Activated CD4-positive, alpha-beta memory T cell treated with anti-CD3 and anti-CD28 coated beads for 36 hours (primary cell): ENCODE measurements at regions of chr9 and their contacts with region 1.

Region 1: DNA sequence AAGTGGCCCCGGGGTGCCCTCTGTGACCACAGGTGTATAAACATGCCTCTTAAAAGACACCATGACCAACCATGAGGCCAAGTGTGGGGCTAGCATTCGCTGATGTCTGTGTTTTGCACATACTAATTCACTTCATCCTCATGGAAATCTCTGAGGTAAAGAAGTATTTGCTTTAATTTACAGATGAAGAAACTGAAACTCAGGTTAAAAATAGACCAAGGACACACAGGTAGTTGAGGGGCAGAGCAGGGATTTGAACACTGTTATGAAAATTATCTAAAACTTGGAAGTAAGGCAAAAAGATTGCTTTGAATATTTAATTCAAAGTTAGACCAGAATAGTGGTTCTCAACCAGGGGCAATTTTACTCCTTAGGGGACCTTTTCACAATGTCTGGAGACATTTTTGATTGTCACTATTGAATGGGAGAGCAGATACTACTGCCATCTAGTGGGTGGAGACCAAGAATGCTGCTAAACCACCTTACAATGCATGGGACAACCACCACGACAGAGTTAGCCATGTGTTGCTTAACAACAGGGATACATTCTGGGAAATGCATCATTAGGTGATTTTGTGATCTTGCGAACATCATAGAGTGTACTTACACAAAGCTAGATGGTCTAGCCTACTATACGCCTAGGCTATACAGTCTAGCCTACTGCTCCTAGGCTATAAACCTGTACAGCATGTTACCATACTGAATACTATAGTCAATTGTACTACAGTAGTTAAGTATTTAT is 8.0 kb upstream of the FXN start:
- DNase-seq: peak; percentile 39
- H3K4me3 Mint-ChIP-seq: no peak overlapping the region
- H3K27ac Mint-ChIP-seq: peak overlapping the region; percentile 40
- H3K4me1 Mint-ChIP-seq: peaks cover 32% of the 10 kb centered on the region
- H3K27me3 Mint-ChIP-seq: no peaks in the 10 kb centered on the region

Region 2: GRCh38 chr9:68584189-68585033 is 443.1 kb before region 1 on chr9:
- CTCF ChIA-PET with region 1: interaction called, 6 read pairs
- POLR2A ChIA-PET with region 1: no interaction called
- intact Hi-C with region 1: loop called (anchors 1 kb)
- DNase-seq: peak; percentile 87
- H3K4me3 Mint-ChIP-seq: no peak overlapping the region
- H3K27ac Mint-ChIP-seq: no peak overlapping the region
- H3K4me1 Mint-ChIP-seq: no peaks in the 10 kb centered on the region
- H3K27me3 Mint-ChIP-seq: peaks cover 6% of the 10 kb centered on the region

Region 3: DNA sequence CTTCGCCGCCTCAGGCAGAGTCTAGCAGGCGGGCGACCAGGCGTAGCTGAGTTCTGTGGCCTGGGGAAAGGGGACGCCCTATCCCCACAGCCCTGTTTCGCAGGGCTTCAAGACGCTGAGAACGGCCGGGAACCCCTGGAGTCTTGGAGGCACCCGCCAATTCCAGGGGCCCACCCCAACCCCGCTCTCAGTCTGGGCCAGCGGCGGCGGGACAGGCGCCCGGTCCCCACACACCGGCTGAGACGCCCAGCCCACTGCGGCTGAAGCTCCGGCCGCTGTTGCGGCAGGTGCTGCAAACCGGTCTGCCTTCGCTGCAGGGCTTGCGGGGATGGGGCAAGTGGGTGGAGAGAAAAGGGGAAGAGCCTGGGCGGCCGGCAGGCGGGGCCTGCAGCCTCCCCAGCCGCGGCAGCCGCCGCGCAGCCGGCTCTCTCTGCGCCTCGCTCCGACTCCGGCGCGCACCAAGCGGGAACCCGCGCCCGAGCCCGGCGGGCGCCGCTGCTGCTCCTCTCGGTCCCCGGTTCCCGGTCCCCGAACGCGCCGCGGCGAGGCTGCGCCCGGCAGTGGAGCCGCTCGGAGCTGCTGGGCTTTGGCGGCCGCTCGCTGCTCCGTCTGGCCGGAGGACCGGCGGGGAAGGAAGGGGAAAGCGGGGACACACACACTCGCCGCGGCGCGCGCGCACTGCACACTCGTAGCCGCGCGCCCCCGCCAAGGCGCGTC is 322.6 kb before region 1 on chr9 and contains the start of gene PIP5K1B:
- CTCF ChIA-PET with region 1: no interaction called
- POLR2A ChIA-PET with region 1: no interaction called
- intact Hi-C with region 1: loop called (anchors 5 kb)
- DNase-seq: peak; percentile 64
- H3K4me3 Mint-ChIP-seq: peak within 1 kb of the TSS; percentile 77
- H3K27ac Mint-ChIP-seq: no peak within 1 kb of the TSS
- H3K4me1 Mint-ChIP-seq: peaks cover 19% of the 10 kb centered on the region
- H3K27me3 Mint-ChIP-seq: peaks cover 65% of the 10 kb centered on the region
- total RNA-seq, gene PIP5K1B: 1.1 to 1.6 TPM

Region 4: GRCh38 chr9:68779558-68780384 is 247.8 kb before region 1 on chr9:
- CTCF ChIA-PET with region 1: no interaction called
- POLR2A ChIA-PET with region 1: no interaction called
- intact Hi-C with region 1: loop called (anchors 5 kb)
- DNase-seq: peak; percentile 95
- H3K4me3 Mint-ChIP-seq: no peak overlapping the region
- H3K27ac Mint-ChIP-seq: no peak overlapping the region
- H3K4me1 Mint-ChIP-seq: peaks cover 5% of the 10 kb centered on the region
- H3K27me3 Mint-ChIP-seq: no peaks in the 10 kb centered on the region

Region 5: GRCh38 chr9:68925175-68925574 is 102.4 kb before region 1 on chr9:
- CTCF ChIA-PET with region 1: no interaction called
- POLR2A ChIA-PET with region 1: no interaction called
- intact Hi-C with region 1: no loop called
- DNase-seq: no peak
- H3K4me3 Mint-ChIP-seq: no peak overlapping the region
- H3K27ac Mint-ChIP-seq: no peak overlapping the region
- H3K4me1 Mint-ChIP-seq: peaks cover 2% of the 10 kb centered on the region
- H3K27me3 Mint-ChIP-seq: peaks cover 16% of the 10 kb centered on the region